Sciatic nerve (tissue), 2 donors: ENCODE measurements at regions of chr3 and their contacts with region 1.

Region 1: DNA sequence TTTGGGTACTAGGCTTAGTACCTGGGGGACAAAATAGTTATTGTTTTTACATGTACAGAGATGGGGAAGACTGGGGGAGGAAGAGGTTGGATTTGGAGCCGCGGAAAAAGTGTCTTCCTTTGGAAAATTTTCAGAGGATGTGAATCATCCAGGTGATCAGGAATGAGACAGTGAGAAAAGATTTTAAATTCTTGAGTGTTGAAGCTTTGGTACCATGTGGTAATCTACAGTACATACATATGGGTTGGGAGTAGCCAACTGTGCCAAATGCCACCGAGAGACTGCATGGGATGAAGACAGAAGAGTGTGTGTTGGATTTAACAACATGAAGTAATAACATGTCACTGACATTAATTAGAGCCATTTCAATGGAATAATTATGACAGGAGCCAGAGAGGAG is 1238.2 kb downstream of the ROBO1 start:
- DNase-seq: no peak
- ATAC-seq: no peak

Region 2: GRCh38 chr3:76789237-76789636 is 1740.4 kb before region 1 on chr3:
- intact Hi-C with region 1: loop called (anchors 10 kb)
- DNase-seq: no peak
- ATAC-seq: no peak

Region 3: GRCh38 chr3:78494851-78495250 is 34.8 kb before region 1 on chr3:
- intact Hi-C with region 1: no loop called
- DNase-seq: no peak
- ATAC-seq: no peak

Region 4: GRCh38 chr3:78880603-78881461 is 351.2 kb after region 1 on chr3:
- intact Hi-C with region 1: no loop called
- DNase-seq: no peak
- ATAC-seq: peak; percentile 85